ENCODE measurements at regions of chr1 and their contacts with region 1.

Region 1: DNA sequence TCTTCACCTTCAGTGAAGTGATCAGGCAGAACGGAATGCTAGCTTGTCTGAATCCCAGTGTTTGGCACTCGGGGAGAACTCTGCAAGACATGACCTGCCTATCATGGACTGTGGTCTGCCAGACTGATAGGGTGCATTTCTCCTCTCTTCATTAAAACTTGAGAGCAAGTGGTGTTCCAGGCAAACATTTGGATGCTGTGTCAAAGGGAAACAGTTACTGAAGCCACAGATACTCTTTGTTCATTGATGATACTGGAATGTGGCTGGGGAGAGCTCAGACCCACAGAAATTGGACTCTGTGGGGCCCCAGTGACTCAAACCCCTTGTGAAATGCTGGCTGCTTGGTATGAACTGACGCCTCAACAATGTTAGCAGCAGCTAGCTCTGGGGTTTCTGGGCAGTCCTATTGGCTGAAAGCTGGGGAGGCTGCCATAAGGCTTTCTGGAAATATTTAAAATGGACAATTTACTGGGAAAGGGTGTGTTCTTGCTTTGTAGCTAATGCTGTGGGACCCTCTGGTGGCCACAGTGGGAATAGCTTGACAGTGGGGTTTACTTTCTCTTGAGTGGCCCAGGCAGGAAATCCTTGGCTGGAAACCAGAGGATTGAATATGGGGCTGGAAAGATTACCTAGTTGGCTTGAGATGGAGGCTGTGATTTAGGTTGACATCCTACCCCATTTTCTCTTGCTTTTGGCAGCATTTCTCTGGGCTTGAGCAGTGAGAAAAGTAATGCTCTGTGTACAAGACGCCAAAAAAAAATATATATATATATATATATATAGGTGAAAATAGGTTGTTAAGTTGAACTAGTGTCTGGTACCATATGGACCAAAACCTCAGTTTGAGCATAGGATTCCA is 8.0 kb upstream of the S100A10 start:
- DNase-seq: peak; percentile 50
- H3K4me3 Mint-ChIP-seq: no peak overlapping the region
- H3K27ac Mint-ChIP-seq: no peak overlapping the region
- H3K4me1 Mint-ChIP-seq: peaks cover 7% of the 10 kb centered on the region
- H3K27me3 Mint-ChIP-seq: peaks cover 35% of the 10 kb centered on the region

Region 2: DNA sequence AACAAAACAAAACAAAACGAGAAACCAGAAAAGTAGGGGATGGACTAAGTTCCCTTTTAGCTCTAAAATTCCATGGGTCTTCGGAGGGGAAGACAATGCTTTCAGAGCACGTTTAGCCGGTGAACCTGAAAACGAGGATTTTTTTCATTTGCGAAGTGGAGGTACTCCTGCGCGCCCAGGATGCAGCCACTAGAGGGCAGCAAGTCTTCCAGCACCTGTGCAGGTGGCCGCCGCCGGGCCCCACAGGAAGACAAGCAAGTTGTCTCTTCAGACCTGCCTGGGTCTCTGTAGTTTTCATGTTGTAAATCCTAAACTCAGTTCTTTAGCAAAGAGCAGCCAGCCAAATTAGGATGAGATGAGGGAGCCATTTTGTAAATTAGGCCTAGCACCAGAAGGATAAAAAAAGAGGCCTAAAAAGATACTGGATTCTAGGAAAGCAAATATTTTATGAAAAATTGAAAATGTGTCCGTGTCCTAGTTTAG is 407.4 kb before region 1 on chr1:
- intact Hi-C with region 1: loop called (anchors 5 kb)
- DNase-seq: peak; percentile 75
- H3K4me3 Mint-ChIP-seq: peak overlapping the region; percentile 52
- H3K27ac Mint-ChIP-seq: no peak overlapping the region
- H3K4me1 Mint-ChIP-seq: peaks cover 12% of the 10 kb centered on the region
- H3K27me3 Mint-ChIP-seq: peaks cover 8% of the 10 kb centered on the region

Region 3: GRCh38 chr1:151720974-151721787 is 280.4 kb before region 1 on chr1 and contains the start of gene RIIAD1:
- intact Hi-C with region 1: no loop called
- DNase-seq: peak; percentile 36
- H3K4me3 Mint-ChIP-seq: peak within 1 kb of the TSS; percentile 77
- H3K27ac Mint-ChIP-seq: no peak within 1 kb of the TSS
- H3K4me1 Mint-ChIP-seq: peaks cover 18% of the 10 kb centered on the region
- H3K27me3 Mint-ChIP-seq: peaks cover 76% of the 10 kb centered on the region
- total RNA-seq, gene RIIAD1: not detected in 2 replicates

Region 4: DNA sequence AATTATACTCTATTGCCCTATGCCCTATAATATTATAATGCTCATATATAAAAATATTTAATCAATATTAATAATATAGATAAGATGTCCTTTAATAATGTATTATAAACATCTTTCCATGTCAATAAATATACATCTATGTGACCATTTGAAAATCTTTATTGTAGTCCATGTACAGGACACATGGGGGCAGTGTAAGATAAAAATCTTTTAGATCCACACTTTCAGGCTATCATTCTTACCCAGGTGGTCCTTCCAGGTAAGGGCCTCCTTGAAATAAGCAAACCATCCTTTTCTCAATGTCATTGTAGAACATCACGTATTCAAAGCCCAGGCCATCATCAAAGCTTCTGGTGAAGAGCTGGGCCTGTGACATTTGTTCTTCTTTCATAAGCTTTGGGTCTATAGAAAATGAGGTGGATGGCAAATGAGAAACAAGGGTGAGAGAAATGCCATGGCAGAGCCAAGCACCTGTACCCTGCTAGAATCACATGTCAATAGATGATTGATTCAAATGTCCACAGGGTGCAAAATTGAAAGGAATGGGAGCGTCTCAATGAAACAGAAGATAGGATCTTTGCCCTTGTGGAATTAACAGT is 112.5 kb before region 1 on chr1:
- intact Hi-C with region 1: loop called (anchors 1 kb)
- DNase-seq: no peak
- H3K4me3 Mint-ChIP-seq: no peak overlapping the region
- H3K27ac Mint-ChIP-seq: no peak overlapping the region
- H3K4me1 Mint-ChIP-seq: peaks cover 30% of the 10 kb centered on the region
- H3K27me3 Mint-ChIP-seq: no peaks in the 10 kb centered on the region

Region 5: GRCh38 chr1:152047730-152048402 is 46.2 kb after region 1 on chr1:
- intact Hi-C with region 1: no loop called
- DNase-seq: peak; percentile 83
- H3K4me3 Mint-ChIP-seq: peak overlapping the region; percentile 80
- H3K27ac Mint-ChIP-seq: peak overlapping the region; percentile 96
- H3K4me1 Mint-ChIP-seq: peaks cover 40% of the 10 kb centered on the region
- H3K27me3 Mint-ChIP-seq: peaks cover 3% of the 10 kb centered on the region